ENCODE measurements at regions of chr6 and their contacts with region 1.

Region 1: GRCh38 chr6:30219244-30219643 is 6.0 kb upstream of the TRIM26 start:
- DNase-seq: peak; percentile 75
- ATAC-seq: peak; percentile 64
- H3K4me3 Mint-ChIP-seq: no peak overlapping the region
- H3K27ac Mint-ChIP-seq: peak overlapping the region; percentile 37
- H3K4me1 Mint-ChIP-seq: peaks cover 17% of the 10 kb centered on the region
- H3K27me3 Mint-ChIP-seq: peaks cover 3% of the 10 kb centered on the region

Region 2: DNA sequence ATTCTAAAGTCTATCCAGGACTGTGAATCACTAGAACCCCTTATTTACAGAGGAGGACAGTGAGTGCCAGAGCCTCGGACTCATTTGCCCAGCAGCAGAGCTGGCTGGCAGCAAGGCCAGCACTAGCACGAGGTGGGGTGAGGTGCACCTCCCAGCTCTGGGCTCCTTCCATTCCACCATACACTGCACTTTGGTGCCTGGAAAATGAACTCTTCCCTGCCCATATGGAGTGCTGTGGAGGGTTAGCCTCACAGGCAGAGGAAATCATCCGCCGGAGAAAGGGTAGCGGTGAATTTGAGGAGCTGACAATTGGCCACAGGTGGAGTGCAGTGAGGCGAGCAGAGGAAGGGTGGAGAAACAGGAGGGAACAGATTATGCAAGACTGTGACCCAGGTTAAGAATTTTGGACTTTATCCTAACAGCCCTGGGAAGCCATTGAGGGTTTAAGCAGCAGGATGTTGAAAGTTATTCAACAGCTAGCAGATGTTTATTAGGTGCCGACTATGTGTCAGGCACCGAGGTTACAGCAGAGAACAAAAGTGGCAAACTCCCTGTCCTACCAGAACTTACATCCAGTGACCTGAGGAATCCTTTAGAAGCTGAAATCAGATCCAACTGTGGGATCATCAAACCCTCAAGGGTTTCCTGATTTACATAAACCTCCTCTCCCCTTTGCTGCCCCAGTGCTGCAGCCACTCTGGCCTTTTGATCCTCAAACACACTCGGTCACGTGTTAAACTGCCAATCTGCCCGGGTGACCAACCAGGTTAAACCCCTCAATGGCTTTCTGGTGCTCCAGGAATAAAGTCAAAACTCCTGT is 12.2 kb before region 1 on chr6:
- CTCF ChIA-PET with region 1: interaction called, 18 read pairs
- POLR2A ChIA-PET with region 1: interaction called, 5 read pairs
- DNase-seq: no peak
- ATAC-seq: no peak
- H3K4me3 Mint-ChIP-seq: no peak overlapping the region
- H3K27ac Mint-ChIP-seq: peak overlapping the region; percentile 58
- H3K4me1 Mint-ChIP-seq: peaks cover 62% of the 10 kb centered on the region
- H3K27me3 Mint-ChIP-seq: no peaks in the 10 kb centered on the region

Region 3: DNA sequence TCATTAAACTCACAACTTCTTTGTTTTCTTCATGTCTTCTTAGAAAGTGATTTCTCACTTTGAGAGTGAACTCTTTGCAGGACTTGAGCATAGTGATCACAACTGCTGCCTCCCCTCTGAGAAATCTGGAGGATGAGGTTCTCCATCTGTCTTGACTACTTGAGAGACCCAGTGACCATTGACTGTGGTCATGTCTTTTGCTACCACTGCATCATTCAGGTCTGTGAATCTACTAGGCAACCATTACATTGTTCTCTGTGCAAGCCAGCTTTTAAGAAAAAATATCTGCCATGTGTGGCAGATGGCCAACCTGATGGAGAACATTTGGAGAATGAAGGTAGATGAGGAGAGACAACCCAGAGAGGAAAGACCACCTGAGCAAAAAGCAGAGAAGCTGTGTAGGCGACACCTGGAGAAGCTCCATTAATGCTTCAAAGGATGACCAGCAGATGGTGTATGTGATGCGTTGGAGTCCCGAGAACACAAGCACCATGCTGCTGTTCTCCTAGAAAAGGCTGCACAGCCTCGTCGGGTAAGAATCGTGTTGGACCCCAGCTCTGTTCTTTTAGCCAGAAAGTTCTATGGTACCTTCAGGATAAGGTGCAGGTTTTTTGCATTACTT is 19.0 kb after region 1 on chr6:
- CTCF ChIA-PET with region 1: interaction called, 29 read pairs
- POLR2A ChIA-PET with region 1: no interaction called
- DNase-seq: peak; percentile 51
- ATAC-seq: peak; percentile 78
- H3K4me3 Mint-ChIP-seq: no peak overlapping the region
- H3K27ac Mint-ChIP-seq: no peak overlapping the region
- H3K4me1 Mint-ChIP-seq: no peaks in the 10 kb centered on the region
- H3K27me3 Mint-ChIP-seq: peaks cover 37% of the 10 kb centered on the region

Region 4: DNA sequence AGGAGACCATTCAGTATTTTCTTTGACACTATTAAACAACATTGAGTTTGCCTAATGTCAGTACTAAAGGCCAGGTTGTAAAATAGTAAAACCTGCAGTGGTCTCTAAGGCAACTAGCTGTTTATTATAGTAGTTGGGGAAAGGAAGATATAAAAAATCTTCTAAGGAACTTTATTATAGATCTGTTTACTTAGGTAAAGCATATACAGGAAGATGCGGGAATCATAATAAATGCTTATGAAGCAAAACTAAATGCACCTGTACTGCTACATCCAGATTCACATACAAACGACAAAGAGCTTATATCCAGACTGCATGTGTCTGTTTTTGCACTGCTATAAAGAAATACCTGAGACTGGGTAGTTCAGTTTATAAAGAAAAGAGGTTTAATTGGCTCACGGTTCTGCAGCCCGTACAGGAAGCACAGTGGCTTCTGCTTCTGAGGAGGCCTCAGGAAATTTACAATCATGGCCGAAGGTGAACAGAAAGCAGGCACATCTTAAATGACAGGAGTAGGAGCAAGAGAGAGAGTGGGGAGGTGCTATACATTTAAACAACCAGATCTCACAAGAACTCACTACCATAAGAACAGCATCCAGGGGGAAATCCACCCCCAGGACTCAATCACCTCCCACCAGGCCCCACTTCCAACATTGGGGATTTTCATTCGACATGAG is 98.8 kb after region 1 on chr6:
- CTCF ChIA-PET with region 1: interaction called, 11 read pairs
- POLR2A ChIA-PET with region 1: no interaction called
- DNase-seq: no peak
- ATAC-seq: no peak
- H3K4me3 Mint-ChIP-seq: peak overlapping the region; percentile 2
- H3K27ac Mint-ChIP-seq: peak overlapping the region; percentile 3
- H3K4me1 Mint-ChIP-seq: peaks cover 44% of the 10 kb centered on the region
- H3K27me3 Mint-ChIP-seq: no peaks in the 10 kb centered on the region

Region 5: GRCh38 chr6:30326526-30327260 is 107.4 kb after region 1 on chr6 and contains the start of gene TRIM39:
- CTCF ChIA-PET with region 1: interaction called, 12 read pairs
- POLR2A ChIA-PET with region 1: interaction called, 25 read pairs
- DNase-seq: peak; percentile 92
- ATAC-seq: peak; percentile 73
- H3K4me3 Mint-ChIP-seq: peak within 1 kb of the TSS; percentile 96
- H3K27ac Mint-ChIP-seq: peak within 1 kb of the TSS; percentile 99
- H3K4me1 Mint-ChIP-seq: peaks cover 53% of the 10 kb centered on the region
- H3K27me3 Mint-ChIP-seq: no peaks in the 10 kb centered on the region
- total RNA-seq, gene TRIM39: 16.7 to 16.9 TPM

Region 6: DNA sequence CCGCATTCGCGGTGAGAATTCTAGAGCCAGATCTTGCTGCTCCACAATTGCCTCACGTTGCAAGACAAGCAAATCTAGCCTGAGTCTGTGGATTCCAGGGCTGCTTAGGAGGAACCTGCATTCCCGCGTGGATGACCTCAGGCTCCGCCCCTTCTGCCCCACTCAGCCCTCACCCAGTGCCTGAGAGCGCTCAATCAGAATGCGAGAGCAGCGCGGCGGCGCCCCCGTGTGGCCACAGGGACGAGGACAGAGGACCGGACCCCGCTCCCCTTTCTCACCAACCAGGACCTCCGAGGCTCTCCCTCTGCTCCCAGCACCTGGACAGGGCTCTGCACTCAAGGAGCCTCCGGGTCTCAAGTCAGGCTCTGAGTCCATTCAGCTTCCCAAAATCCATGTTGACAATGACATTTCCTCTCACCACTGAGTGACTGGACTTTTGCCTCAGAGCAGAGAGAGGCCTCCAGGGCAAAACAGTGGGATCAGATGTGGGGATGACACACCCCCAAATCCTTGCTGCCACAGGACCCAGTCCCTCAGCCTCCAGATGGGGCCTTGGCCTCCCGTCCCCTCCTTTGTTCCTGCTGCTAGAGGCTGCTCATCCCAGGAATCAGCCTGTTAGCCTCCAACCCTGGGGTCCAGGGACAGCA is 177.7 kb after region 1 on chr6:
- CTCF ChIA-PET with region 1: interaction called, 13 read pairs
- POLR2A ChIA-PET with region 1: no interaction called
- DNase-seq: peak; percentile 88
- ATAC-seq: peak; percentile 99
- H3K4me3 Mint-ChIP-seq: no peak overlapping the region
- H3K27ac Mint-ChIP-seq: no peak overlapping the region
- H3K4me1 Mint-ChIP-seq: no peaks in the 10 kb centered on the region
- H3K27me3 Mint-ChIP-seq: peaks cover 39% of the 10 kb centered on the region